MCF 10A (cell line): ENCODE measurements at regions of chr20 and their contacts with region 1.

Region 1: GRCh38 chr20:43537921-43538877 is 20.6 kb upstream of the SGK2 start:
- DNase-seq: peak; percentile 68
- H3K4me3 Mint-ChIP-seq: no peak overlapping the region
- H3K27ac Mint-ChIP-seq: no peak overlapping the region
- H3K4me1 Mint-ChIP-seq: peaks cover 5% of the 10 kb centered on the region
- H3K27me3 Mint-ChIP-seq: no peaks in the 10 kb centered on the region
- CTCF ChIP-seq: peak; percentile 95

Region 2: GRCh38 chr20:43243672-43244269 is 294.4 kb before region 1 on chr20:
- CTCF ChIA-PET with region 1: no interaction called
- POLR2A ChIA-PET with region 1: no interaction called
- intact Hi-C with region 1: no loop called
- DNase-seq: peak; percentile 10
- H3K4me3 Mint-ChIP-seq: no peak overlapping the region
- H3K27ac Mint-ChIP-seq: no peak overlapping the region
- H3K4me1 Mint-ChIP-seq: no peaks in the 10 kb centered on the region
- H3K27me3 Mint-ChIP-seq: no peaks in the 10 kb centered on the region
- CTCF ChIP-seq: no peak

Region 3: DNA sequence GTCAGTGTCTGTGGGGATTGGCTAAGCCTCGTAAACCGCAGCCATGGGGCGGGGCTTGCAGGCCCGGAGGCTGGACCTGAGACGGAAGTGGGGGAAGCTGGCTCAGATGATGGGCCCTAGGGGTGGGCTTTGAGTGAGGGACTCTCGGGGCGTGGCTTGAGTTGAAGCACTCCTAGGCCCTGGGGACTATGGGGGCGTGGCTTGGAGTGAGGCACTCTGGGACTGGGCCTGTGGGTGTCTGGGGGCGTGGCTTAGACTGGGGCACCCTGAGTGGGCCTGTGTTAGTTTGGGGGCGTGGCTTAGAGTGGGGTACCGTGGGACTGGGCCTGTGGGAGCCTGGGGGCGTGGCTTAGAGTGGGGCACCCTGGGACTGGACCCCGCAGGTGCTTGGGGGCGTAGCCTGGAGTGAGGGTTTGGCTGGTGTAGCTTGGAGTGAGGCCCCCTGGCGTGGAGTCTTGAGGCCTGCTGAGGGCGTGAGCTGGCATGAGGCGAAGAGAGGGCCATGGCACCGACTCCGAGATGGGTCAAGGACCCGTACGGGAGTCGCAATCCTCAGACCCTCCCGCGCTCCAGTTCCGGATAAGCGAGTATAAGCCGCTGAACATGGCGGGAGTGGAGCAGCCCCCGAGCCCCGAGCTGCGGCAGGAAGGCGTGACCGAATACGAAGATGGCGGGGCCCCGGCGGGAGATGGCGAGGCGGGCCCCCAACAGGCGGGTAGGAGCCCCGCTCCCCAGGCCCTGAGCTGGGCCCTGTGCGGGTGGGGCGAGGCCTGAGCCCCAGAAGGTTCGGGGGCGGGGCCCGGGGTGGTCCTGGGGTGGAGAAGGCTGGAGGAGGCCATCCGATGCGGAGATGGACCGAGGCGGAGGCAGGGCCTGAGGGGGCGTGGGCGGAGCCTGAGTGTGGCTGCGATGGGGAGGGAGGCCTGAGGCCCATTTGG is 23.9 kb before region 1 on chr20:
- CTCF ChIA-PET with region 1: interaction called, 22 read pairs
- POLR2A ChIA-PET with region 1: interaction called, 4 read pairs
- intact Hi-C with region 1: no loop called
- DNase-seq: peak; percentile 99
- H3K4me3 Mint-ChIP-seq: peak overlapping the region; percentile 99
- H3K27ac Mint-ChIP-seq: peak overlapping the region; percentile 89
- H3K4me1 Mint-ChIP-seq: peaks cover 20% of the 10 kb centered on the region
- H3K27me3 Mint-ChIP-seq: no peaks in the 10 kb centered on the region
- CTCF ChIP-seq: peak; percentile 11

Region 4: DNA sequence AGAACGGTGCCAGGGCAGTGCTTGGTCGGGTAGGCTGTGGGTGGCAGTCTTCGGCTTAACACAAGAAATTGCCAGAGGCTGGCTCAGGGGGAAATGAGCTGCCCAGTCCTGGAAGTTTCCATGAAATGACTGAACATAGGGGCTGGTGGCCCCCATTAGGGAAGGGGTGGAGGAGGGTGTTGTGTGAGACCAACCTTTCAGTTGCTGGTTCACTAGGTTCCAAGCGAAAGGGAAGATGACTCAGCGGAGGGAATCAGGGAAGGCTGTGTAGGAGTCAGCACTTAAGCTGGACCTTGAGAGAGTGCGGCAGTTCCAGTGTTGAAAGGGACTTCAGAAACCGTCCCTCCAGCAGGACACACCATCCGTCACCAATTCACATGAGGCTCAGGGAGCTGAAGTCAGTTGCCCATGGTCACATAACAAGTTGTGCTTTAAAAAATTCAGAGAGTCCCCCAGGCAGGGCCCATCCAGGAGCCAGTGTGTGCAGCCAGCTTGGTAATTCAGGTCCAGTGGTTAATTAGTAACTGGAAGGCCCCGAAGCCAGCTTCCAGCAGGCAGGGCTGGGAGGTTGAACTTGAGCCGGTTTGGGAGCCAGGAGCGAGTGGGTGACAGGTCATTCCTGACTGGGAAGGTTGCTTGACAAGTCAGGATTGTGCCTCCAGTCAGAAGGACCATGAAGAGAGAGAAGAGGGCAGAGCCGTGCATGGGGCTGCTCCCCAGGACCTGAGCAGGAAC is 20.4 kb after region 1 on chr20 and contains the start of gene SGK2:
- CTCF ChIA-PET with region 1: interaction called, 25 read pairs
- POLR2A ChIA-PET with region 1: interaction called, 3 read pairs
- intact Hi-C with region 1: no loop called
- DNase-seq: no peak
- H3K4me3 Mint-ChIP-seq: no peak within 1 kb of the TSS
- H3K27ac Mint-ChIP-seq: no peak within 1 kb of the TSS
- H3K4me1 Mint-ChIP-seq: no peaks in the 10 kb centered on the region
- H3K27me3 Mint-ChIP-seq: no peaks in the 10 kb centered on the region
- CTCF ChIP-seq: no peak
- total RNA-seq, gene SGK2: 0.33 and 1.1 TPM in 2 replicates

Region 5: GRCh38 chr20:43576108-43576507 is 37.9 kb after region 1 on chr20:
- CTCF ChIA-PET with region 1: interaction called, 52 read pairs
- POLR2A ChIA-PET with region 1: no interaction called
- intact Hi-C with region 1: no loop called
- DNase-seq: no peak
- H3K4me3 Mint-ChIP-seq: no peak overlapping the region
- H3K27ac Mint-ChIP-seq: no peak overlapping the region
- H3K4me1 Mint-ChIP-seq: no peaks in the 10 kb centered on the region
- H3K27me3 Mint-ChIP-seq: no peaks in the 10 kb centered on the region
- CTCF ChIP-seq: no peak

Region 6: GRCh38 chr20:43590392-43591323 is 52.5 kb after region 1 on chr20 and contains the start of gene IFT52:
- CTCF ChIA-PET with region 1: interaction called, 52 read pairs
- POLR2A ChIA-PET with region 1: no interaction called
- intact Hi-C with region 1: loop called (anchors 2 kb)
- DNase-seq: peak; percentile 93
- H3K4me3 Mint-ChIP-seq: peak within 1 kb of the TSS; percentile 84
- H3K27ac Mint-ChIP-seq: peak within 1 kb of the TSS; percentile 92
- H3K4me1 Mint-ChIP-seq: peaks cover 6% of the 10 kb centered on the region
- H3K27me3 Mint-ChIP-seq: no peaks in the 10 kb centered on the region
- CTCF ChIP-seq: no peak
- total RNA-seq, gene IFT52: 21.8 and 24.2 TPM in 2 replicates

Region 7: GRCh38 chr20:43824309-43825050 is 286.3 kb after region 1 on chr20:
- CTCF ChIA-PET with region 1: no interaction called
- POLR2A ChIA-PET with region 1: no interaction called
- intact Hi-C with region 1: no loop called
- DNase-seq: no peak
- H3K4me3 Mint-ChIP-seq: no peak overlapping the region
- H3K27ac Mint-ChIP-seq: no peak overlapping the region
- H3K4me1 Mint-ChIP-seq: peaks cover 14% of the 10 kb centered on the region
- H3K27me3 Mint-ChIP-seq: peaks cover 9% of the 10 kb centered on the region
- CTCF ChIP-seq: no peak

Region 8: GRCh38 chr20:44080646-44081267 is 542.6 kb after region 1 on chr20:
- CTCF ChIA-PET with region 1: interaction called, 76 read pairs
- POLR2A ChIA-PET with region 1: no interaction called
- intact Hi-C with region 1: loop called (anchors 1 kb)
- DNase-seq: peak; percentile 85
- H3K4me3 Mint-ChIP-seq: no peak overlapping the region
- H3K27ac Mint-ChIP-seq: no peak overlapping the region
- H3K4me1 Mint-ChIP-seq: peaks cover 12% of the 10 kb centered on the region
- H3K27me3 Mint-ChIP-seq: no peaks in the 10 kb centered on the region
- CTCF ChIP-seq: peak; percentile 96